ENCODE measurements at regions of chr1 and their contacts with region 1.

Region 1: GRCh38 chr1:224513787-224514209 is 79.2 kb upstream of the WDR26 start:
- DNase-seq: peak; percentile 85 to 90
- H3K4me3 ChIP-seq: no peak overlapping the region
- H3K4me3 Mint-ChIP-seq: no peak overlapping the region
- H3K27ac Mint-ChIP-seq: no peak overlapping the region
- H3K4me1 ChIP-seq: peaks cover 8% of the 10 kb centered on the region; the same call in 1 of the 2 replicates
- H3K4me1 Mint-ChIP-seq: no peaks in the 10 kb centered on the region
- H3K27me3 ChIP-seq: no peaks in the 10 kb centered on the region
- H3K27me3 Mint-ChIP-seq: no peaks in the 10 kb centered on the region
- CTCF ChIP-seq: peak; percentile 95 to 99

Region 2: GRCh38 chr1:224851210-224851847 is 337.5 kb after region 1 on chr1:
- CTCF ChIA-PET with region 1: interaction called, 3 read pairs
- POLR2A ChIA-PET with region 1: no interaction called
- intact Hi-C with region 1: loop called (anchors 1 kb)
- DNase-seq: peak; percentile 43 to 54
- H3K4me3 ChIP-seq: no peak overlapping the region
- H3K4me3 Mint-ChIP-seq: no peak overlapping the region
- H3K27ac Mint-ChIP-seq: no peak overlapping the region
- H3K4me1 ChIP-seq: no peaks in the 10 kb centered on the region
- H3K4me1 Mint-ChIP-seq: no peaks in the 10 kb centered on the region
- H3K27me3 ChIP-seq: no peaks in the 10 kb centered on the region
- H3K27me3 Mint-ChIP-seq: no peaks in the 10 kb centered on the region
- CTCF ChIP-seq: peak; percentile 39 to 53